ENCODE measurements at regions of chr15 and their contacts with region 1.

Region 1: DNA sequence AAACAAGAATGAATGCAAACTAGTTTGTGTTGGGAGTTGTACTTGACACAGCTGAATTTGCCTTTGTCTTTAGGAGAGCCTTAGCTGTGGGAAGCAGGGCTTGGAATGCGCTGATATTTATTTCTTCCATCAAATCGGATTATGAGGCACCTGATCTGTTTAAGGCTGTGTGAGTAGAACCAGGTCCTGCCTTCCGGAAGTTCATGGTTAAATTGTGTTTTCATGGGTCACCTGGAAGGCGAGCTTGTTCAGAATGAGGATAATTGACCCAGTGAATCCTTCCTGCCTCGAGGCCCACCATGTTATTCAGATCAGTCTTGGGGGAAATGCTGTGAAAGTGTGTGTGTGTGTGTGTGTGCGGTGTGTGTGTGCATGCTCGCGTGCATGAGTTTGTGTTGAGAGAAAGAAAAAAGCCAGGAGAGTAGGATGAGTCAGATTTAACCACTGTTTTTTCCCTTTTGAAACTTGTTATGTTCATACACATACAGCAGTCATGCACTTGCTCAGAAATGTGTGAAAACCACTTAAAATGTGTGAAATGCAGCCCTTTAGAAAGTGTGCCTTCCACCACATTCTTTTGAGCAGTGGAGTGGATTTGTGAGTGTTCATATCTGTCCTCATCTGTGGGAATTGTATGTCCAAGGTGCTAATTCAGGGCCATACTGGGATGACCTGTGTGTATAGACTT is 36.7 kb downstream of the SMAD3 start:
- DNase-seq: peak; percentile 80
- H3K4me3 Mint-ChIP-seq: no peak overlapping the region
- H3K27ac Mint-ChIP-seq: no peak overlapping the region
- H3K4me1 Mint-ChIP-seq: peaks cover 28% of the 10 kb centered on the region
- H3K27me3 Mint-ChIP-seq: no peaks in the 10 kb centered on the region

Region 2: GRCh38 chr15:67024314-67024997 is 77.6 kb before region 1 on chr15:
- CTCF ChIA-PET with region 1: no interaction called
- POLR2A ChIA-PET with region 1: no interaction called
- intact Hi-C with region 1: loop called (anchors 5 kb)
- DNase-seq: peak; percentile 78
- H3K4me3 Mint-ChIP-seq: no peak overlapping the region
- H3K27ac Mint-ChIP-seq: no peak overlapping the region
- H3K4me1 Mint-ChIP-seq: peaks cover 33% of the 10 kb centered on the region
- H3K27me3 Mint-ChIP-seq: peaks cover 1% of the 10 kb centered on the region

Region 3: GRCh38 chr15:67080900-67081431 is 21.1 kb before region 1 on chr15:
- CTCF ChIA-PET with region 1: interaction called, 21 read pairs
- POLR2A ChIA-PET with region 1: interaction called, 117 read pairs
- intact Hi-C with region 1: loop called (anchors 1 kb)
- DNase-seq: peak; percentile 89
- H3K4me3 Mint-ChIP-seq: no peak overlapping the region
- H3K27ac Mint-ChIP-seq: peak overlapping the region; percentile 82
- H3K4me1 Mint-ChIP-seq: peaks cover 96% of the 10 kb centered on the region
- H3K27me3 Mint-ChIP-seq: no peaks in the 10 kb centered on the region

Region 4: DNA sequence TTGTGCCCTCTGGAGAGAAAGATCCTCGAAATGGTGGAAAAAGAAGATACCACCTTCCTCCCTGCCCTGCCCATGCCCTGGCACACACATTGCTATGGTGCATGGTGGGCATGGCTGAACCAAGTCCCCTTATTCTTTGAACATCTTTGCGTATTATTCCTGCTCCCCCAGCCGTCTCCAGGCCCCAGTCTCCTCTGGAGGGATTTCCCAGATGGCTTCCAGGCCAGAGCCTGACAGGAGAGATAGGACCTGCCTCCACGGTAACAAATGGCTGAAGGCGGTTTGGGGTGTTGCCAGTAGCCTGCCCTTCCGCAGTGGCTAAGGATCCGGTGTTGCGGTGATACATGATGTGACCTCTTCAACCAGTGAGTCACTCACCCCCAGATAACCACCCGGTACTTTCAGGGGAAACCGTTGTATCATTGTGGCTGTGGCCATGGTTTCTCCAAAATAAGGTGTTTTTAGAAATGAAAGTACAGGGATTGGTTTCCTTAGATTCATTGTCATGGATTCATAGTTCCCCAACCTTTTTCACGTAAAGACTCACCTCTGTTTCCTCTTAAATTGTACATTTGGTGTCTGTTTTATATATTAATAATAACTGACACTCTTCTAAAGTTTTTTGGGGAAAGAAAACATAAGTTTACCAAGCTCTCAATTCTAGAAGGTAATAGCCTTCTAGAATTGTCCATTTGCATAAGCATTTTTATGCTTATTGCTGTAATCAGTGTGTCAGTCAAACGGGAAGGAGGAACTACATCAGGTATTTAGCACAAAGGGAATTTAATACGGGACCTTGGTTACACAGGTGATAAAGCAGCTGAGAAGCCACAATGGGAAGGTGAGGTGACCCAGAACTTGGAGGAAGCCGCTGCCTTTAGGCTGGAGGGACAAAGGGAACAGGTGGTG is 10.7 kb before region 1 on chr15:
- CTCF ChIA-PET with region 1: interaction called, 21 read pairs
- POLR2A ChIA-PET with region 1: interaction called, 117 read pairs
- intact Hi-C with region 1: loop called (anchors 1 kb)
- DNase-seq: peak; percentile 90
- H3K4me3 Mint-ChIP-seq: peak overlapping the region; percentile 44
- H3K27ac Mint-ChIP-seq: peak overlapping the region; percentile 78
- H3K4me1 Mint-ChIP-seq: peaks cover 91% of the 10 kb centered on the region
- H3K27me3 Mint-ChIP-seq: no peaks in the 10 kb centered on the region

Region 5: GRCh38 chr15:67120839-67121643 is 19.0 kb after region 1 on chr15:
- CTCF ChIA-PET with region 1: interaction called, 8 read pairs
- POLR2A ChIA-PET with region 1: interaction called, 40 read pairs
- intact Hi-C with region 1: no loop called
- DNase-seq: peak; percentile 95
- H3K4me3 Mint-ChIP-seq: peak overlapping the region; percentile 75
- H3K27ac Mint-ChIP-seq: peak overlapping the region; percentile 95
- H3K4me1 Mint-ChIP-seq: peaks cover 89% of the 10 kb centered on the region
- H3K27me3 Mint-ChIP-seq: no peaks in the 10 kb centered on the region

Region 6: GRCh38 chr15:67150028-67150860 is 48.2 kb after region 1 on chr15:
- CTCF ChIA-PET with region 1: no interaction called
- POLR2A ChIA-PET with region 1: interaction called, 5 read pairs
- intact Hi-C with region 1: loop called (anchors 1 kb)
- DNase-seq: peak; percentile 76
- H3K4me3 Mint-ChIP-seq: peak overlapping the region; percentile 62
- H3K27ac Mint-ChIP-seq: peak overlapping the region; percentile 85
- H3K4me1 Mint-ChIP-seq: peaks cover 73% of the 10 kb centered on the region
- H3K27me3 Mint-ChIP-seq: no peaks in the 10 kb centered on the region

Region 7: DNA sequence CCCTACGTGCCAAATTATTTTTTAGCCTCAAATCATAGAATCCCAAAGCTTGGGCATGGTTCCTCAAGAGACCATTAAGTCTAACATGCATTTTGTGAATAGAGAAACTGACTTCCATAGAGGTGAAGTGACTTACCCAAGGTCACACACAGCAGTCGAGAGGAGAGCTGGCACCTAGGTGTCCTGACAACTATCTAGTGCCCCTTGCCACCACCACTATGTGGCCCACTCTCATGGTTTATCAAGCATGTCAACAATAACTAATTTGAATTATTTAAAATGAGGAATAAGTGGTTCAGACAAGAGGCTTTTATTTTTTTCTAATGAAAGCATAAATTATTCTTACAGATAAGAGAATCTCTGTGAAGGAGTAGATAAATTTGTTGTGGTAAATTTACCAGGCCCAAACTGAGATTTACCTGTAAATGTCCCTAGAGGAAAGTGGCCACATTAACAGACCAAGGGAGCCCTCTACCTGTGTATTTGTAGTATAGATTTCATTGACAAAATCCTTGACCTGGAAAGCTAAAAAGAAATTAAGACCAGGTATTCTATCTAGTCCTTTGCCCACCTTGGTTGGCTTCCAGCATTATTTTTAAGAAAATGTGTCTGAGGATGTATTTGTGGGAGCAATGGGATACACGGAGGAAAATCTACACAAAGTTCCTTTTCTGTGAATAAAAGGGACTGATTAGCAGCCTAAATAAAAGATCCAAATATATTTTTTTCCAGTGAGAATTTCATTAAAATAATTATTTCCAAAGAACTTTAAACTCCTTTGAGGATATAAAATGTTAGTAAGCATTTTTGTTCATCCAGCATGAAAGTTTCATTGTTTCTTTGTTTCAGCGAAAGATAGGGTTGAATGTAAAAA is 201.7 kb after region 1 on chr15:
- CTCF ChIA-PET with region 1: interaction called, 7 read pairs
- POLR2A ChIA-PET with region 1: no interaction called
- intact Hi-C with region 1: loop called (anchors 1 kb)
- DNase-seq: no peak
- H3K4me3 Mint-ChIP-seq: no peak overlapping the region
- H3K27ac Mint-ChIP-seq: no peak overlapping the region
- H3K4me1 Mint-ChIP-seq: peaks cover 14% of the 10 kb centered on the region
- H3K27me3 Mint-ChIP-seq: peaks cover 6% of the 10 kb centered on the region

Measured in activated CD4-positive, alpha-beta memory T cell treated with anti-CD3 and anti-CD28 coated beads for 36 hours (primary cell).